PC-9 (cell line): ENCODE measurements at regions of chr4 and their contacts with region 1.

Region 1: DNA sequence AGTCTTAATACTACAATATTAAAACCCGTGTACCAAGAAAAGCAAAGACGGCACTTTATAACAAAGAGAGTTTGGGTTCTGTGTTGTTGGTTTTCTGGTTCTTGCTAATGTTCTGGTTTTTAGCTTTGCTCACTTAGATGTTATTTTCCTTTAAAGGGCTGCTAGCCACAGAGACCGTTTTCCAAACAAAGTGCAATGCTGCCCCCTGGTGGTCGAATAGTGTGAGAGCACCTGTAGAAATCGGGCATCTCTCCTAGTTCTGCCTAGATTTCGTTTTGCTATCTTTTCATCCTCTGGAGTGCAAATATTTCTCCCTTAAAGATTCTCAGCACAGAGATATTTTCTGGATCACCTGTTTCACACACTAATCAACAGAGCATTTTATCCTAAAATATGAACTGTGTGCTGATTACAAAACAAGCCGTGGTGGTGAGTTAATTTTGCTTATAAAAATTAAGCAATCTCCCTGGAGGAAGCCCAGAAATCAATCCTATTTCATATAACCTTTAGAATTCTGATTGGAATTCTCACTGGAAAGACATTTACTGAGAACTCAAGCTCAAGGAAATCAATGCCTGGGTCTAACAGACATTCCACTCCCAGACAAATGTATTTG is 334.5 kb upstream of the NOCT start:
- DNase-seq: peak in 1 of 2 experiments; percentile 60
- H3K4me3 ChIP-seq: no peak overlapping the region
- H3K27ac ChIP-seq: no peak overlapping the region
- H3K4me1 ChIP-seq: no peaks in the 10 kb centered on the region
- H3K27me3 ChIP-seq: no peaks in the 10 kb centered on the region
- CTCF ChIP-seq: peak; percentile 83

Region 2: GRCh38 chr4:137124278-137124932 is 1556.7 kb before region 1 on chr4:
- CTCF ChIA-PET with region 1: no interaction called
- POLR2A ChIA-PET with region 1: no interaction called
- intact Hi-C with region 1: loop called (anchors 10 kb)
- DNase-seq: peak; percentile 1 to 36
- H3K4me3 ChIP-seq: peak overlapping the region; percentile 56; the same call in 1 of the 2 replicates
- H3K27ac ChIP-seq: no peak overlapping the region
- H3K4me1 ChIP-seq: no peaks in the 10 kb centered on the region
- H3K27me3 ChIP-seq: no peaks in the 10 kb centered on the region
- CTCF ChIP-seq: peak; percentile 62

Region 3: DNA sequence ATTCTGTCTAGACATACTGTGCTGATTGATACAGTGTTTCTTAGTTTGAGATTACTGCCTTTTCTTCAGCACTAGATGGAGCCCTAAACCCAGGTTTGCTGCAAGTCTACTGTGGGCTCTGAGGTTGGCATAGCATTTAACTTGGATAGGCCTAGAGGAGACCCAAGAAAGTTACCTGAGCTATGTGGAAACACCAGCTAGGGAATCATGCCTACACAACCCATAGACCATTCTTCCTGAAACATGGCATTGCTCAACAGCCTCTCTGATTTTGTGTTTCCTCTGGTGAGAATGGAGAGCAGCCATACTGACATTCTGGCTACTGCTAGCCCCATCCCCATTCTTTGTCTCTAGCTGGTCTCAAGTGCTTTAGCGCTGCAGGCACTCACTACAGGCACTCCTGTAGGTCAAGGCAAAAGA is 861.1 kb before region 1 on chr4:
- CTCF ChIA-PET with region 1: no interaction called
- POLR2A ChIA-PET with region 1: no interaction called
- intact Hi-C with region 1: loop called (anchors 1 kb)
- DNase-seq: peak; percentile 12 to 37
- H3K4me3 ChIP-seq: no peak overlapping the region
- H3K27ac ChIP-seq: no peak overlapping the region
- H3K4me1 ChIP-seq: no peaks in the 10 kb centered on the region
- H3K27me3 ChIP-seq: no peaks in the 10 kb centered on the region
- CTCF ChIP-seq: peak; percentile 69

Region 4: GRCh38 chr4:138090150-138090917 is 590.8 kb before region 1 on chr4:
- CTCF ChIA-PET with region 1: no interaction called
- POLR2A ChIA-PET with region 1: no interaction called
- intact Hi-C with region 1: loop called (anchors 5 kb)
- DNase-seq: peak; percentile 60 to 61
- H3K4me3 ChIP-seq: peak overlapping the region; percentile 36; the same call in 1 of the 2 replicates
- H3K27ac ChIP-seq: no peak overlapping the region
- H3K4me1 ChIP-seq: no peaks in the 10 kb centered on the region
- H3K27me3 ChIP-seq: no peaks in the 10 kb centered on the region
- CTCF ChIP-seq: peak; percentile 79

Region 5: GRCh38 chr4:138235419-138235952 is 445.6 kb before region 1 on chr4:
- CTCF ChIA-PET with region 1: interaction called, 6 read pairs
- POLR2A ChIA-PET with region 1: no interaction called
- intact Hi-C with region 1: loop called (anchors 5 kb)
- DNase-seq: peak in 1 of 2 experiments; percentile 95
- H3K4me3 ChIP-seq: peak overlapping the region; percentile 53; the same call in 1 of the 2 replicates
- H3K27ac ChIP-seq: peak overlapping the region; percentile 100
- H3K4me1 ChIP-seq: peaks cover 52% of the 10 kb centered on the region
- H3K27me3 ChIP-seq: no peaks in the 10 kb centered on the region
- CTCF ChIP-seq: no peak

Region 6: GRCh38 chr4:138602664-138603063 is 78.4 kb before region 1 on chr4:
- CTCF ChIA-PET with region 1: no interaction called
- POLR2A ChIA-PET with region 1: no interaction called
- intact Hi-C with region 1: no loop called
- DNase-seq: no peak
- H3K4me3 ChIP-seq: no peak overlapping the region
- H3K27ac ChIP-seq: no peak overlapping the region
- H3K4me1 ChIP-seq: no peaks in the 10 kb centered on the region
- H3K27me3 ChIP-seq: no peaks in the 10 kb centered on the region
- CTCF ChIP-seq: no peak

Region 7: GRCh38 chr4:138659812-138660316 is 21.2 kb before region 1 on chr4:
- CTCF ChIA-PET with region 1: no interaction called
- POLR2A ChIA-PET with region 1: no interaction called
- intact Hi-C with region 1: no loop called
- DNase-seq: no peak
- H3K4me3 ChIP-seq: no peak overlapping the region
- H3K27ac ChIP-seq: no peak overlapping the region
- H3K4me1 ChIP-seq: no peaks in the 10 kb centered on the region
- H3K27me3 ChIP-seq: no peaks in the 10 kb centered on the region
- CTCF ChIP-seq: no peak

Region 8: DNA sequence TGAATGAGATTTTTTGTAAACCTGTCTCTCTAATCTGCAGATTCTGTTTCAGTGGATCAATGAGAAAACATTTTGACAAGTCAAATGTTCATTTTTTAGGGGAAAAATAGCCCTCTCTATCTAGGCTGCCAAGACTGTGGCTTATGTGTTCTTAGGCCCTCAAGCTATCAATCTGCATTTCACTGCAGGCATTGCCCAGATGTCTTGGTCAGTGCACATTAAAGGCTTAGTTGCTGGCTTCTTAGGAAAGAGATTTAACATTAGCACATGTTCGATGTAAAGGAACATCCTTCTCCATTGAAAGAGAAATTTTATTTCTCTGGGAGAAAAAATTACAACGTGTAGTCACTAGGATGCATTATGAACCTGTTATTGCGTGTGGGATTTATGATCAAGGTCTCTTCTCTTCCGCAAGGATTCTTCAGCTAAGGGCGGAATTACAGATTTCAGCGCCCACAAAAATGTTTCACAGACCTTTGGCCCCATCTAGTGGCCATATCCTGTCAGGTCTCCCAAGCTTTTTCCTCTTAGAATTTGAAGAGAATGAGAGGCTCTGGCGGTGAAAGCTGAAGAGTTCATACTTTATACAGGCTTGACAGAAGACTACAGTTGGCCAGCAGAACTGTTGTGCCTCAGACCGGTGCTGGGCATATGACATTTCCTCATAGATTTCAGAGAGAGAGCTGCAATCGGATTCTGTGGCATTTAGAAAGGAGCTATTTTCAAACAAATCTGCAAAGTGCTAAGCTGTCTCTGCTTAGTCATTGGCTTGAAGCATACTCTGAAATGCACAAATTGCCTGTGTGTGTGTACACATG is 189.8 kb after region 1 on chr4:
- CTCF ChIA-PET with region 1: interaction called, 5 read pairs
- POLR2A ChIA-PET with region 1: no interaction called
- intact Hi-C with region 1: loop called (anchors 2 kb)
- DNase-seq: peak; percentile 62 to 65
- H3K4me3 ChIP-seq: no peak overlapping the region
- H3K27ac ChIP-seq: no peak overlapping the region
- H3K4me1 ChIP-seq: no peaks in the 10 kb centered on the region
- H3K27me3 ChIP-seq: no peaks in the 10 kb centered on the region
- CTCF ChIP-seq: peak; percentile 81

Region 9: GRCh38 chr4:138919094-138919936 is 238.2 kb after region 1 on chr4:
- CTCF ChIA-PET with region 1: no interaction called
- POLR2A ChIA-PET with region 1: no interaction called
- intact Hi-C with region 1: loop called (anchors 2 kb)
- DNase-seq: peak; percentile 44 to 77
- H3K4me3 ChIP-seq: no peak overlapping the region
- H3K27ac ChIP-seq: no peak overlapping the region
- H3K4me1 ChIP-seq: no peaks in the 10 kb centered on the region
- H3K27me3 ChIP-seq: no peaks in the 10 kb centered on the region
- CTCF ChIP-seq: peak; percentile 69